BJ (cell line): ENCODE measurements at regions of chr15 and their contacts with region 1.

Region 1: GRCh38 chr15:28123408-28124023 is 24.4 kb upstream of the OCA2 start:
- DNase-seq: no peak
- H3K4me3 ChIP-seq: no peak overlapping the region
- H3K27me3 ChIP-seq: no peaks in the 10 kb centered on the region
- CTCF ChIP-seq: peak; percentile 83

Region 2: GRCh38 chr15:28140062-28140461 is 16.5 kb after region 1 on chr15:
- CTCF ChIA-PET with region 1: interaction called, 18 read pairs
- POLR2A ChIA-PET with region 1: no interaction called
- DNase-seq: no peak
- H3K4me3 ChIP-seq: no peak overlapping the region
- H3K27me3 ChIP-seq: no peaks in the 10 kb centered on the region
- CTCF ChIP-seq: no peak

Region 3: GRCh38 chr15:28147801-28148200 is 24.3 kb after region 1 on chr15:
- CTCF ChIA-PET with region 1: interaction called, 10 read pairs
- POLR2A ChIA-PET with region 1: no interaction called
- DNase-seq: no peak
- H3K4me3 ChIP-seq: no peak overlapping the region
- H3K27me3 ChIP-seq: no peaks in the 10 kb centered on the region
- CTCF ChIP-seq: no peak